ENCODE measurements at regions of chr9 and their contacts with region 1.

Region 1: GRCh38 chr9:19127881-19128500 is 699 bp upstream of the PLIN2 start:
- DNase-seq: peak in 7 of 9 experiments; percentile 7 to 68 (median 46)
- ATAC-seq: peak; percentile 19
- H3K4me3 ChIP-seq: peak overlapping the region; percentile 62 to 70
- H3K4me3 Mint-ChIP-seq: peak overlapping the region; percentile 93
- H3K27ac ChIP-seq: peak overlapping the region; percentile 83 to 91
- H3K27ac Mint-ChIP-seq: peak overlapping the region; percentile 94
- H3K4me1 ChIP-seq: peaks cover 48% of the 10 kb centered on the region
- H3K4me1 Mint-ChIP-seq: peaks cover 53% of the 10 kb centered on the region
- H3K27me3 ChIP-seq: no peaks in the 10 kb centered on the region
- H3K27me3 Mint-ChIP-seq: no peaks in the 10 kb centered on the region
- CTCF ChIP-seq: no peak

Region 2: GRCh38 chr9:19085295-19085694 is 42.7 kb before region 1 on chr9:
- CTCF ChIA-PET with region 1: interaction called, 5 read pairs
- POLR2A ChIA-PET with region 1: no interaction called
- intact Hi-C with region 1: loop called in 1 of 2 experiments (anchors 5 kb)
- DNase-seq: peak in 2 of 9 experiments; percentile 51 to 66
- ATAC-seq: peak; percentile 71
- H3K4me3 ChIP-seq: no peak overlapping the region
- H3K4me3 Mint-ChIP-seq: no peak overlapping the region
- H3K27ac ChIP-seq: no peak overlapping the region
- H3K27ac Mint-ChIP-seq: no peak overlapping the region
- H3K4me1 ChIP-seq: no peaks in the 10 kb centered on the region
- H3K4me1 Mint-ChIP-seq: peaks cover 3% of the 10 kb centered on the region
- H3K27me3 ChIP-seq: no peaks in the 10 kb centered on the region
- H3K27me3 Mint-ChIP-seq: no peaks in the 10 kb centered on the region
- CTCF ChIP-seq: peak; percentile 56

Region 3: DNA sequence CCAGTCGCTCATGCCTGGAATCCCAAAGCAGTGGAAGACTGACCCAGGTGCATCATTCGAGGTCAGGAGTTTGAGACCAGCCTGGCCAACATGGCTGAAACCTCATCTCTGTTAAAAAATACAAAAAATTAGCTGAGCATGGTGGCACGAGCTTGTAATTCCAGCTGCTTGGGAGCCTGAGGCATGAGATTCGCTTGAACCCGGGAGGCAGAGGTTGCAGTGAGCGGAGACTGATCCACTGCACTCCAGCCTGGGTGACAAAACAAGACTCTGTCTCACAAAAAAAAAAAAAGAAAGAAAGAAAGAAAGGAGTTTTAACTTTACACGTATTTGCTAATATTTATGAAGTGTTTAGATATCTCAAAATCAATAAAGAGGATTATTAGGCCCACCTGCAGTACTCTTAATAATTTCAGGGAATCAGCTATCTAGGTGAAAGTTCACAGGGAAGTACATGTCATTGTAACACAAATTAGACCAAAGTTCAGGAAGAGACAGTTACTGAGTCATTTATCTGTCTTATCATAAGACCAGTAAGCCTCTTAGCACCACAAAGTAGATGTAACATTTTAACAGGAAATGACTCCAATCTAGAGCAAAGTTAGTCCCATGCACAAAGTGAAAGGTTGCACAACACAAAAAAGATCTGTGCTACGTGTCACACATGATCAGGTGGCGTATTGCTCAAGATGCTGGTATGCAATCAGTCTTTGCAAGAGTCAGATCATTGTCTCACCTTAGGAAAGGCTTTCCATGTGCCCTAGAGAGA is 33.5 kb after region 1 on chr9:
- CTCF ChIA-PET with region 1: interaction called, 4 read pairs
- POLR2A ChIA-PET with region 1: interaction called, 3 read pairs
- intact Hi-C with region 1: loop called (anchors 1 to 2 kb)
- DNase-seq: peak in 7 of 9 experiments; percentile 22 to 85 (median 46)
- ATAC-seq: peak; percentile 96
- H3K4me3 ChIP-seq: no peak overlapping the region
- H3K4me3 Mint-ChIP-seq: peak overlapping the region; percentile 40
- H3K27ac ChIP-seq: peak overlapping the region; percentile 29 to 95
- H3K27ac Mint-ChIP-seq: peak overlapping the region; percentile 81
- H3K4me1 ChIP-seq: peaks cover 16% of the 10 kb centered on the region
- H3K4me1 Mint-ChIP-seq: peaks cover 21% of the 10 kb centered on the region
- H3K27me3 ChIP-seq: no peaks in the 10 kb centered on the region
- H3K27me3 Mint-ChIP-seq: no peaks in the 10 kb centered on the region
- CTCF ChIP-seq: no peak

Measured in CD8-positive, alpha-beta T cell (primary cell).